Activated CD4-positive, alpha-beta memory T cell treated with anti-CD3 and anti-CD28 coated beads for 36 hours (primary cell): ENCODE measurements at regions of chr4 and their contacts with region 1.

Region 1: DNA sequence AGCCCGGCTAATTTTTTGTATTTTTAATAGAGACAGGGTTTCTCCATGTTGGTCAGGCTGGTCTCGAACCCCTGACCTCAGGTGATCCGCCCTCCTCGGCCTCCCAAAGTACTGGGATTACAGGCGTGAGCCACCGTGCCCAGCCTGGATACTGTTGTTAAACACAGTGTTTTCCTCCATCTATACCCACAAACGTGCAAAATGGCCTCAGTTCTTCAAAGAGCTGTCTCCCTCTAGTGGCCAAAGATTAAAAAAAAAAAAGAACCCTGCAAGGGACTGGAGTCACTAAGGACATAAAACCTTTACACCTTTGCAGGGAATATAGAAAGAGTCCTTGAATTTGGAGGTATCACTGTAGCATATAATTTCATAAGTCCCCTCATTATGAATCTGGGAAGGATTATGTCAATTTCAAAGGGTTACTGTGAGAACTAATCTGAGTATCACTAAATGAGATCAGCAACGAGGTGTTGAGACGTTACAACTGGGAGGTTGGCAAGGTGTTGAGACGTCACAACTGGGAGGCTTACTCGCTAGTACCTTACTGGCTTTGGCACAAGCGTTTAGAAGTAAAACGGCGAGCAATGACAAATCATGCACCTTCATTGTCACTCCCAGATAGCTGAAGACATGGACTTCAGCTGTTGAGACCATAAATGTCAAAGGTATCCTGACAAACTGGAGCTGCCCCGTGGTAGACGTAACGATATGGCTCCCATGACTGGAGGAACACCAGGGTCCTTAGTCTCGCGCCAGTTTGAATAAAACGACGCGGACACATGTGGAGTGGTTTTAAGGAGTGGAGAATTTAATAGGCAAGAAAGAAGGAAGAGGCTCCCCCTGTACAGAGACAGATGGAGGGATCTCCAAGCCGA is 33.4 kb upstream of the ENPP6 start:
- DNase-seq: peak; percentile 45
- H3K4me3 Mint-ChIP-seq: peak overlapping the region; percentile 31
- H3K27ac Mint-ChIP-seq: peak overlapping the region; percentile 26
- H3K4me1 Mint-ChIP-seq: peaks cover 18% of the 10 kb centered on the region
- H3K27me3 Mint-ChIP-seq: peaks cover 2% of the 10 kb centered on the region

Region 2: DNA sequence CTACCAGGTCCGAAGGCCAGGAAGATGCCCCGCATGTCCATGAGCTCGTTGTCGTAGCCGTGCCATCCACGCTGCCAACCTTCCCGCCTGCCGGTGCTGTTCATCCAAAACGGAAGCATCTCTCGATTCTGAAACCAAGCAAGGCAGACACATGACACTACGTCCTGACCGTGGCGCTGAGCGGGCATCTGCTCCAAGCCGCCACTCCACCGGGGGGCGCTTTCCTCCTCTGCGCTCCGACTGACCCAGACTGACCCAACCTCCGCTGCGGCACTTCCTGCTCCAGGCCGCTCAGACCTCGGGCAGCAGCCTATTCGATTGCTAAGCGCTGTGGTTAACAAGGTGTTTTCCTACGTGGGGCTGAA is 153.8 kb before region 1 on chr4:
- CTCF ChIA-PET with region 1: no interaction called
- POLR2A ChIA-PET with region 1: no interaction called
- intact Hi-C with region 1: loop called (anchors 5 kb)
- DNase-seq: peak; percentile 59
- H3K4me3 Mint-ChIP-seq: peak overlapping the region; percentile 30
- H3K27ac Mint-ChIP-seq: no peak overlapping the region
- H3K4me1 Mint-ChIP-seq: peaks cover 6% of the 10 kb centered on the region
- H3K27me3 Mint-ChIP-seq: peaks cover 14% of the 10 kb centered on the region

Region 3: DNA sequence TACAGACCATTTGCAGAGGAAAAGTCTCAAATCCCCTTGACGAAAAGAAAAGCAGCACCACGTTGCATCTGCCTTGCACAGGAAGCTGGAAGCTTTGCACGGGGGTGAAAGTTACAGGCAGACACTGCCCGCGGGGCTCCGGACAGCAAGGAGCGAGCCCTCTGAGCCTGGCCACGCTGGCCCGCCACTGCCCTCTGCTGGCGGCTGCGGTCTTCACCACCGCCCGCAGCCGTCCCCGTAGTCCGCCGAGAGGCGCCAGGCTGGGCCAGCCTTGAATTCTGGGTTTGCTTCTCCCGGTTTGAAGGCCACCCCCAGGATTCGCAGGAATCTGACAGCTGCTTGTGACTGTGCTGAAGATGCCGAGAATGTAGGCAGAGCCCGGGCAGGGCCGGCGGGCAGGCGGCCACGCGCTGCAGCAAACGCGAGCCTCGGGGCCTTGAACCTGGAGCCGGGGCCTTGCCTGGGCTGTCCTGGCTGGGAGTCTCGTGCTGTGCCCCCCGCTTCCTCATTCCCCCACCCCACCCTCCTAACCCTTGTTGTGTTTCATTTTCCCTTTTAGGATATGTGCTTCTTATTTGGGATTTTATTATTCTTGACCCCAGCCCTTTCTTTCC is 82.5 kb before region 1 on chr4:
- CTCF ChIA-PET with region 1: interaction called, 15 read pairs
- POLR2A ChIA-PET with region 1: no interaction called
- intact Hi-C with region 1: loop called (anchors 2 kb)
- DNase-seq: peak; percentile 70
- H3K4me3 Mint-ChIP-seq: no peak overlapping the region
- H3K27ac Mint-ChIP-seq: no peak overlapping the region
- H3K4me1 Mint-ChIP-seq: peaks cover 2% of the 10 kb centered on the region
- H3K27me3 Mint-ChIP-seq: peaks cover 44% of the 10 kb centered on the region

Region 4: DNA sequence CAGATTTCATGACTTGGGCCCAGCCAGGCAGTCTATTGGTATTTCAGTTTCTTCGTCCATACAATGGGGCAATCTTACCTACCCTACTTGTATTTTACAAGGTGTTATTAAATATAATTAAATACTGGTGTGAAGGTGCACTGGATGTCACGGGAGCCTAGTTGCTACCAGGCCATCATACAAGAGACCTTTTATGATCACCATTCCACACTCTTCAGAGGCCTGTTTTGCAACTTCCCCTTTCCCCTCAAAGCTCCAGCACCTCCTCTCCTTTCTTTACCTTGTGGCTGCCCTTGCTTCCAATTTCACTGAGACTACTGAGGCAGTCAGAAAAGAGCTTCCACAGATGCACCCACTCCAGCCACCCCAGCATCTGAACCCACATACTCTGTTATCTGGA is 673.5 kb after region 1 on chr4:
- CTCF ChIA-PET with region 1: no interaction called
- POLR2A ChIA-PET with region 1: no interaction called
- intact Hi-C with region 1: no loop called
- DNase-seq: no peak
- H3K4me3 Mint-ChIP-seq: no peak overlapping the region
- H3K27ac Mint-ChIP-seq: no peak overlapping the region
- H3K4me1 Mint-ChIP-seq: no peaks in the 10 kb centered on the region
- H3K27me3 Mint-ChIP-seq: peaks cover 1% of the 10 kb centered on the region